ENCODE measurements at regions of chr17 and their contacts with region 1.

Region 1: GRCh38 chr17:67707442-67707841 is 10.3 kb upstream of the NOL11 start:
- DNase-seq: no peak
- ATAC-seq: no peak
- H3K4me3 ChIP-seq: no peak overlapping the region
- H3K27ac ChIP-seq: no peak overlapping the region
- H3K4me1 ChIP-seq: no peaks in the 10 kb centered on the region
- H3K27me3 ChIP-seq: no peaks in the 10 kb centered on the region
- CTCF ChIP-seq: no peak

Region 2: DNA sequence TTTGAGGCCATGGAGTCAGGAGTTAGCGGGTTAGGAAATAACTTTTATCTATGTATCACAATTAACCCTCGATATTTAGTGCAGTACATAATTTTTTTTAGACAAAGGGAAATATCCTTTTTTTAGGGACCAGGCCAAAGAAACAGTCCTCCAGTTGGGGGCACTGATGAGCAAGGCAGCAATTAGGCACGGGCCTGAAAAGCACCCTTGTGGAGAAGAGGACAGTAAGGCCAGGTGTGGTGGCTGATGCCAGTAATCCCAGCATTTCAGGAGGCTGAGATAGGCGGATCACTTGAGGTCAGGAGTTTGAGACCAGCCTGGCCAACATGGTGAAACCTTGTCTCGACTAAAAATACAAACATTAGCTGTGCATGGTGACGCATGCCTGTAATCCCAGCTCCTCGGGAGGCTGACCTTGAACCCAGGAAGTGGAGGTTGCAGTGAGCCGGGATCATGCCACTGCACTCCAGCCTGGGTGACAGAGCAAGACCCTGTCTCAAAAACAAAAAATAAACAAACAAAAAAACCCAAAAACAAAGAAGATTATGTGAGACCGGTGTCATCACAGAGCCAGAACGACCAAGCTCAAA is 148.0 kb before region 1 on chr17:
- CTCF ChIA-PET with region 1: interaction called, 12 read pairs
- POLR2A ChIA-PET with region 1: no interaction called
- in situ Hi-C with region 1: no loop called
- intact Hi-C with region 1: no loop called
- DNase-seq: no peak
- ATAC-seq: no peak
- H3K4me3 ChIP-seq: no peak overlapping the region
- H3K27ac ChIP-seq: no peak overlapping the region
- H3K4me1 ChIP-seq: no peaks in the 10 kb centered on the region
- H3K27me3 ChIP-seq: no peaks in the 10 kb centered on the region
- CTCF ChIP-seq: peak; percentile 37

Region 3: GRCh38 chr17:67649891-67650290 is 57.6 kb before region 1 on chr17:
- CTCF ChIA-PET with region 1: no interaction called
- POLR2A ChIA-PET with region 1: interaction called, 12 read pairs
- in situ Hi-C with region 1: no loop called
- intact Hi-C with region 1: no loop called
- DNase-seq: no peak
- ATAC-seq: no peak
- H3K4me3 ChIP-seq: no peak overlapping the region
- H3K27ac ChIP-seq: no peak overlapping the region
- H3K4me1 ChIP-seq: no peaks in the 10 kb centered on the region
- H3K27me3 ChIP-seq: no peaks in the 10 kb centered on the region
- CTCF ChIP-seq: no peak

Region 4: GRCh38 chr17:67773246-67773645 is 65.8 kb after region 1 on chr17:
- CTCF ChIA-PET with region 1: no interaction called
- POLR2A ChIA-PET with region 1: no interaction called
- in situ Hi-C with region 1: no loop called
- intact Hi-C with region 1: no loop called
- DNase-seq: no peak
- ATAC-seq: no peak
- H3K4me3 ChIP-seq: no peak overlapping the region
- H3K27ac ChIP-seq: no peak overlapping the region
- H3K4me1 ChIP-seq: no peaks in the 10 kb centered on the region
- H3K27me3 ChIP-seq: no peaks in the 10 kb centered on the region
- CTCF ChIP-seq: no peak

Measured in Panc1 (cell line).